ENCODE measurements at regions of chr6 and their contacts with region 1.

Region 1: DNA sequence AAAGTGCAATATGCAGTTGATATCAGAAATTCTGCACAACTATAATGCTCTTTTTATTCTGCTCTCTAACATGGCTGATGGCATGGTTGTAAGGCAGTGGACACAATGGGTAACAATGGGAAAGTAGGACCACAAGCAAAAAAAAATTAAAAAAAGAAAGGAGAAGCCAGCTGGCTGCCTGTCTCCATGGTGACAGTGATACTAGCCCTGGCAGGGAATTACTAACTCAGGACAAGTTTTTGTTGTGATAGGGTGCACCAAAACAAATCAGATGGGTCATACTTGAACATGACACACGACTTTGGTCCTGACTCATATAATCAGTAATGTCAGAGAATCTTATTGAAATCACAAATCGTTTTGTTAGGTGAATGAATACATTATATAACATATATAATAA is 169.4 kb downstream of the TRDN start:
- DNase-seq: no peak
- ATAC-seq: no peak
- H3K4me3 ChIP-seq: no peak overlapping the region
- H3K27ac ChIP-seq: no peak overlapping the region
- H3K4me1 ChIP-seq: no peaks in the 10 kb centered on the region
- H3K27me3 ChIP-seq: no peaks in the 10 kb centered on the region; the same call in 1 of the 2 replicates
- CTCF ChIP-seq: no peak

Region 2: DNA sequence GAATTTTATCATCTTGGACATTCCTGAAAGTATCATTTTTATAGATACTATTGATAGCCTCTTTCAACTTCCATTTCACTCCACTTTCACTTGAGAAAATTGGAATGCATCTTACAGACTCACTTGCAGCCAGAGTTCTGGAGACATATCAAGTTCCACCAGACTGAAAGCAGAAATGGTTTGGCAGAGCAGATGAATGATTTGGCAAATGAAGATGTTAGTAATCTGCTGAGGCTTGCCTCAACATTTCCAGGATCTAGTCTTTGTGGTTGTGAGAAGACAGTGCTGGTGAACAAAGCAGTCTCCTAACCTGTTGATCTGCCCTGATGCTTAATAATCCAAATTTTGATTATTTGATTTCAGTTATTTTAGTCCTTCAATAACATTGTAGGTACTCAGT is 33.2 kb before region 1 on chr6:
- CTCF ChIA-PET with region 1: no interaction called
- POLR2A ChIA-PET with region 1: interaction called, 10 read pairs
- in situ Hi-C with region 1: no loop called
- intact Hi-C with region 1: no loop called
- DNase-seq: no peak
- ATAC-seq: no peak
- H3K4me3 ChIP-seq: no peak overlapping the region
- H3K27ac ChIP-seq: no peak overlapping the region
- H3K4me1 ChIP-seq: no peaks in the 10 kb centered on the region
- H3K27me3 ChIP-seq: no peaks in the 10 kb centered on the region
- CTCF ChIP-seq: no peak

Measured in Panc1 (cell line).